ENCODE measurements at regions of chr19 and their contacts with region 1.

Region 1: GRCh38 chr19:54316746-54317107 is 3.8 kb upstream of the LILRA5 start:
- DNase-seq: no peak
- H3K4me3 ChIP-seq: no peak overlapping the region
- H3K27ac ChIP-seq: no peak overlapping the region
- H3K4me1 ChIP-seq: no peaks in the 10 kb centered on the region
- H3K27me3 ChIP-seq: no peaks in the 10 kb centered on the region
- CTCF ChIP-seq: no peak
- EP300 ChIP-seq: no peak
- POLR2A ChIP-seq: no peak

Region 2: DNA sequence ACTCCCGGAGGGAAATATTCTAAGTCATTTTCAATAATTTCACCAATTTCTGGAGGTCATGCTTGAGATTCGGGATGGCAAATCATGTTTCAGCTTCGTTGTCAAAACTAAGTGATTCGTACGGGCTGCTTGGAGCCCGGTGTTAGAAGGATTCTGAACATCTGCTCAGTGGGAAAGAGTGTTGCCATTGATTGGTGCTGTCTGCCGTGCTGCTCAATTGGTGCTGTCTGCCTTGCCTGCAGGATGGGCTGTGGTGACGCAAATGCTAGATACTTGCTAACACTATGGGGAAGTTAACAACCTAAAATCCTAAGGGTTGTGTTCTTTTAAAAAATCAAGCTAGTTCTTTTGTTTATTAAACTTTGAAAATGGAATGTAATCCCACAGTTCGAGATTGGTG is 371.3 kb before region 1 on chr19:
- intact Hi-C with region 1: no loop called
- DNase-seq: no peak
- H3K4me3 ChIP-seq: no peak overlapping the region
- H3K27ac ChIP-seq: no peak overlapping the region
- H3K4me1 ChIP-seq: no peaks in the 10 kb centered on the region
- H3K27me3 ChIP-seq: no peaks in the 10 kb centered on the region
- CTCF ChIP-seq: no peak
- EP300 ChIP-seq: no peak
- POLR2A ChIP-seq: no peak

Region 3: GRCh38 chr19:54343868-54344267 is 27.1 kb after region 1 on chr19:
- intact Hi-C with region 1: loop called in 1 of 4 experiments (anchors 1 kb)
- DNase-seq: no peak
- H3K4me3 ChIP-seq: no peak overlapping the region
- H3K27ac ChIP-seq: no peak overlapping the region
- H3K4me1 ChIP-seq: no peaks in the 10 kb centered on the region
- H3K27me3 ChIP-seq: no peaks in the 10 kb centered on the region
- CTCF ChIP-seq: no peak
- EP300 ChIP-seq: no peak
- POLR2A ChIP-seq: no peak

Measured in ovary (tissue), 10 donors.